PC-3 (cell line): ENCODE measurements at regions of chr2 and their contacts with region 1.

Region 1: GRCh38 chr2:12702305-12703121 is 14.2 kb upstream of the TRIB2 start:
- DNase-seq: peak; percentile 94
- ATAC-seq: peak; percentile 79
- H3K4me3 ChIP-seq: peak overlapping the region; percentile 28; the same call in 1 of the 2 replicates
- H3K27ac ChIP-seq: peak overlapping the region; percentile 99
- H3K4me1 ChIP-seq: peaks cover 57% of the 10 kb centered on the region
- H3K27me3 ChIP-seq: no peaks in the 10 kb centered on the region
- CTCF ChIP-seq: no peak

Region 2: DNA sequence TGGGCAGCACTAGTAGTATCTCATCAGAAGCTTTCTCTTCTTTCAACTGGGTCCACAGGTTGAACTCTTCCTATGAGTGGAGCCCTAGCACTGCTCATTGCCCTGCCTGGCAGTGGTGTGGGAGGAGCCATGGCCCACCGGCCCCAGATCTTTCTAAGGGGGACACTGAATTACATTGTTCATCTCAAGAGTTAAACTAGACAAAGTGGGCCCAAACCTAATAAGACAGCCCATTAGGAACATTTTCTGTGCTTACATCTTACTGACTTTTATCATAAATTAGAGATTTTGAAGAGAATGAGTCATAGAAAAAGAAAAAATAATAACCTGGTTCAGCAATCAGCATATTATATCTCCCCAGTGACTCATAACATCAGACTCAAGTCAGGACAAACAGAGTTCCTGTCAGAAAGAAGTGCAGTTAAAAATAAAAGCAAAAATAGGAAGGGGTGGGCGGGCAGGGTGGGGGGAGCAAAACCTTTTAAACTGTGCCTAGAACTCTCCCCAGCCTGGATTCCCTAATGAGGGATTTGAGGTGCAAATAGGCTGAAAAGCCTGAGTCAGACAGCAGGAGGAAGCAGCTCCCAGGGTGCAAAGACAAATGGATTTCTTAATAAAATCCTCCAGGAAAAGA is 147.4 kb before region 1 on chr2:
- CTCF ChIA-PET with region 1: no interaction called
- POLR2A ChIA-PET with region 1: no interaction called
- intact Hi-C with region 1: loop called (anchors 5 kb)
- DNase-seq: peak; percentile 66
- ATAC-seq: peak; percentile 57
- H3K4me3 ChIP-seq: peak overlapping the region; percentile 25; the same call in 1 of the 2 replicates
- H3K27ac ChIP-seq: peak overlapping the region; percentile 82
- H3K4me1 ChIP-seq: peaks cover 32% of the 10 kb centered on the region
- H3K27me3 ChIP-seq: no peaks in the 10 kb centered on the region
- CTCF ChIP-seq: 0 out of 2 replicates have a peak, but pooled peaks have one; percentile 22

Region 3: GRCh38 chr2:12587729-12588522 is 114.6 kb before region 1 on chr2:
- CTCF ChIA-PET with region 1: no interaction called
- POLR2A ChIA-PET with region 1: no interaction called
- intact Hi-C with region 1: loop called (anchors 10 kb)
- DNase-seq: peak; percentile 80
- ATAC-seq: peak; percentile 96
- H3K4me3 ChIP-seq: 0 out of 2 replicates have a peak overlapping the region, but pooled peaks have one; percentile 9
- H3K27ac ChIP-seq: peak overlapping the region; percentile 56
- H3K4me1 ChIP-seq: peaks cover 25% of the 10 kb centered on the region
- H3K27me3 ChIP-seq: no peaks in the 10 kb centered on the region
- CTCF ChIP-seq: no peak

Region 4: GRCh38 chr2:12684471-12684936 is 18.0 kb before region 1 on chr2:
- CTCF ChIA-PET with region 1: interaction called, 3 read pairs
- POLR2A ChIA-PET with region 1: no interaction called
- intact Hi-C with region 1: loop called (anchors 2 kb)
- DNase-seq: peak; percentile 92
- ATAC-seq: peak; percentile 69
- H3K4me3 ChIP-seq: peak overlapping the region; percentile 5; the same call in 1 of the 2 replicates
- H3K27ac ChIP-seq: peak overlapping the region; percentile 73
- H3K4me1 ChIP-seq: peaks cover 41% of the 10 kb centered on the region
- H3K27me3 ChIP-seq: no peaks in the 10 kb centered on the region
- CTCF ChIP-seq: no peak

Region 5: DNA sequence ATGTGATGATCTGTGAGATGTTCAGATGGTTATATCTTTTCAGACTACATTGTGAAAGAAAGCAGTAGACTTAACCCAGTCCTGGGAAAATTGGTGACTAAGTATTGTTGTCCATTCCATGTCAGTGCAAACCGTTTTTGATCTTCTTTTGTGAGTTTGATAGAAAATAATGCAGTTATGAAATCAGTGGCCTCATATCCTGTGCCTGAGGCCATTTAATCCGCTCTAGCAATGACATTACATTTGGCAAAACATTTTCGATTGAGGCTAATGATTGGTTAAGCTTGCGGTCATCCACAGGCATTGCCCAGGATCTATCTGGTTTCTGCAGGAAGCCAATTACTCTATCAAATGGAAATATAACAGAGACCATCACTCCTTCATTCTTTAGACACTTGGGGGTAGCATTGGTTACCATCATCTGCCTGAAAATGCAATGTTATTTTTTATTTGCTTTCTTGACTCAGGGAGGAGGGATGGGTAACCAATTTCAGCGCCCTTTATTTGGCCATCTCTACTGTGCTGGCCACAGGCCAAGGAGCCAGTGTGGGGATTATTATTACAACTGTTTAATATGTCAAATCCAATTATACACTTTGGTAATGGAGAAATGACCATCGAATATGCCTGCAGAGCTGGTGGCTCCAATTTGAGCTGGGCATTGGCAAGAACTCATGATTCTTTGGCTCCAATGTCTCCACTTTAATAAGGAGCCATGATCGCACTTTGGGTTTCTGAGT is 47.8 kb after region 1 on chr2:
- CTCF ChIA-PET with region 1: no interaction called
- POLR2A ChIA-PET with region 1: no interaction called
- intact Hi-C with region 1: no loop called
- DNase-seq: peak; percentile 3
- ATAC-seq: no peak
- H3K4me3 ChIP-seq: no peak overlapping the region
- H3K27ac ChIP-seq: no peak overlapping the region
- H3K4me1 ChIP-seq: no peaks in the 10 kb centered on the region
- H3K27me3 ChIP-seq: no peaks in the 10 kb centered on the region
- CTCF ChIP-seq: no peak

Region 6: DNA sequence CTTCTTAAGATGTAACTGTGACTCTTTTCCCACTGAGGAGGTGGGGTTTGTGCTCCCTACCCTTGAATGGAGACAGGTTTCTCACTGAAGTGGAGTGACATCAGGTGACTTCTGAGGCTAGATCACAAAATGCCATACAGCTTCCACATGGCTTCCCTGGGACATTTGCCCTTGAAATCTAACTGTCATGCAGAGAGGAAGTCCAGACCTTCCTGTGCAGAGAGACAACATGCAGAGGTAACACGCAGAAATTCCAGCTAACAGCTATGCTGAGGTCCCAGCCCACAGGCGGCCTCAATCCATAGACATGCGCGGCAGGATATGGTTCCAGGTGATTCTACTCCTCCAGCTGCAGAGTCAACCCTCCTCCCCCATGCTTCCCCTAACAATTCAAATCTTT is 133.2 kb after region 1 on chr2:
- CTCF ChIA-PET with region 1: no interaction called
- POLR2A ChIA-PET with region 1: no interaction called
- intact Hi-C with region 1: no loop called
- DNase-seq: no peak
- ATAC-seq: no peak
- H3K4me3 ChIP-seq: no peak overlapping the region
- H3K27ac ChIP-seq: no peak overlapping the region
- H3K4me1 ChIP-seq: no peaks in the 10 kb centered on the region
- H3K27me3 ChIP-seq: no peaks in the 10 kb centered on the region
- CTCF ChIP-seq: no peak